ENCODE measurements at regions of chr22 and their contacts with region 1.

Region 1: GRCh38 chr22:37933711-37934376 is 19.6 kb downstream of the C22orf23 start:
- DNase-seq: peak; percentile 93
- ATAC-seq: peak; percentile 96

Region 2: DNA sequence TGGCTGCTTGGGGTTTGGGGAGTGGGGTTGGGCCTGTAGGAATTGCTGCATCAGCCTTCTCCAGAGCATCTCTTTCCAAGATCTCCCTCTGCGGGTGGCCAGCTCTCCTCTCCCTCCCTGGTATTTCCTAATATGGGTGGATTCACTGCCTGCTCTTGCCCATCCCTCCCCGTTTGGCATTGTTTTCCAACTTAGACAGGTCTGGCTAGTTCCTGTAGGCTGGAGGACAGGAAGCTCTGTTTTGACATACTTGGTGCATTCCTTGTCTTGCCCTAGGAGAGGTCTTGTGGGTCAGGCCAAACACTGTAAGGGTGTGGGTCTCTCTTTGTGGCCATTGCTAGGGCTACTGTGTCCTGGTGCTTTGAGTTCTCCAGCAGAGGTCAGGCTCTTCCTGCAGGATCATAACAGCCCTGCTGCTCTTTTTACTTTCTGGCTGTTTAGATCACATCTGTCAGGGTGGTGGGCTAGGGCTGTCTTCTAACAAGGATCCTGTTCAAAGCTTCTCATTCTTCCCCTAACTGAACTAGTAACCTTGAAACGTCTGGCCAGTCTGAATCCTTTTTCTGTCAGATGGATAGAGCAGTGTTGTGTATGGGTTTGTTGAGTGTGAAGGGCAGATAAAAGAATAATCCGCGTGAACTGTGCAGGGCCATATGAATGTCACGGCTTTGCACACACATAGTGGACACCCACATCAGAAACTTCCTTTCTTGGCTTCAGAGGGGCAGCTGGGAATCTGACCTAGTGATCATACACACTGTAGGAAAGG is 46.0 kb before region 1 on chr22:
- intact Hi-C with region 1: loop called (anchors 10 kb)
- DNase-seq: peak; percentile 52
- ATAC-seq: peak; percentile 49

Region 3: DNA sequence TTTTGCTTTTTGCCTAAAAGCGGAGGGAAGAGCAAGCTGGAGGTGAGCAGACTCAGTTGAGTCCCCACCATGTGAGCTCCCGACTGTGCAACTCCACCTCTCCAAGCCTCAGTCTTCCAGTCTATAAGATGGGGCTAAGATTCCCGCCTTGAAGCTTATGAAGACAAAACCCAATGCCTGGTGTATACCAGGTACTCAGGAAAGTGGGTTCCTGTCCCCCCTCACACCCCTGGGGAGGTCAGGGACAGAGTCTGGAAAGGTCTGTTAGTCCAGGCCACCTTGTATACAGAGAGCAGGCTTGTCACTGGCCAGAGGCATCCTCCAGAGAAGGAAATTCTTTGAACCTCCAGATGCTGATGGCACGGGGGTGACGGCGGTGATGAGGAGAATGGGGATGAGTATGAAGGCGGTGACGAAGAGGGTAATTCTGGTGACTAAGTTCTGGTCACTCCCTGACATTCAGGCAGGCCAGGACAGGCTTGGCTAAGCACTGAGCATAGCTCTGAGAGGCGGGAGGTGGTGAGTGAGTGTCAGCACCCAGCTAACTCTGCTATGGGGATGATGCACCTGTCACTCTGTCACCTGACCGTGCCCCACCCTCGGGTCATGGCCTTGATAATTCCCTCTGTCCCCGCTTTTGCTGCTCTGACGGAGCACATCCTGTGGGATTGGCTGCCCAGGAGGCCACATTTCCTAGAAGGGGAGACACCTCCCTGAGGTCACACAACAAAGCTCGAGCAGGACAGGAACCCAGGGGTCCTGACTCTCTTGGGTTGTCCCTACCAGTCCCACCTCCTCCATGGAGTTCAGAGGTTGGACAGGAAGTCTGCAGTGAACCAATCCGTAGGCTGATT is 414.3 kb after region 1 on chr22:
- intact Hi-C with region 1: no loop called
- DNase-seq: no peak
- ATAC-seq: no peak